AG04449 (cell line): ENCODE measurements at regions of chr11 and their contacts with region 1.

Region 1: DNA sequence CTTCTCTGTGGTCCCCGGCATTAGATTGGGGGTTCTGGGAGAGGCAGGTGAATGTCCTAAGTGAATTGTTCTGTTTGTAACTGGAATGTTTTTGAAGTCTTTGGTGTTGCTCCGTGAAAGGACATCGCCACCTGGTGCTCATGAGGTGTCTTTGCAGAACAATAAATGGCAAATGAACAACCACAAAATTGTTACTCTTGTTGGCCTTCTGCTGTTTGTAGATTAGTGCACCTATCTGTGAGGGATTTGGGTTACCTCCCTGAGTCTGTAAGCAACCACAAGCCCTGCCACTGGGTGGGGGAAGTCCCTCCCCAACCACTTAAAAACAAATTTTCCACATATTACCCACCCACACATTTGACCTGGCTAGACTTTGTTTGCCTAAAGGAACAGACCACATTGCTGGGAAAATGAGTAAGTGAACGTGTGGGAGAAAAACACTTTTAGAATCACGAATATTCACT is 4.7 kb downstream of the MPEG1 start:
- DNase-seq: peak; percentile 21
- H3K4me3 ChIP-seq: no peak overlapping the region
- CTCF ChIP-seq: peak; percentile 68

Region 2: DNA sequence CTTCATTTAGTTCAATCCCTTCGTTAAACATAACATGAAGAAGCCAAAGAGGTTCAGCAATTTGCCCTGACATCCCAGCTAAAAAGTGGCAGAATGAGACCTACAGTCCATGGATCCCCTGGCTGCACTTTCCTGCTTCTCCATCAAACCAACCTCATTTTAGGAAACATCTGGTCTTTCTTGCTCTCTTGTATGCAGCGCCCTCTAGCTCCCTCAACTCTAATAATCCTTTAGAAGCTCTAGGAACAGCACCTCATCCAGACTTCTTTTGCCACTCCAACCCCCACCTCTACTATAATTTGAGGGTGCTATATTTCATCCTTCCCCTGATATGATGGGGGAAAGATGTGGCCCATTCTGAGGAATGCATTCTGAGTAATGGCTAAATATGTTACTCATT is 578.2 kb before region 1 on chr11:
- CTCF ChIA-PET with region 1: no interaction called
- POLR2A ChIA-PET with region 1: no interaction called
- DNase-seq: peak; percentile 9
- H3K4me3 ChIP-seq: no peak overlapping the region
- CTCF ChIP-seq: peak; percentile 56

Region 3: DNA sequence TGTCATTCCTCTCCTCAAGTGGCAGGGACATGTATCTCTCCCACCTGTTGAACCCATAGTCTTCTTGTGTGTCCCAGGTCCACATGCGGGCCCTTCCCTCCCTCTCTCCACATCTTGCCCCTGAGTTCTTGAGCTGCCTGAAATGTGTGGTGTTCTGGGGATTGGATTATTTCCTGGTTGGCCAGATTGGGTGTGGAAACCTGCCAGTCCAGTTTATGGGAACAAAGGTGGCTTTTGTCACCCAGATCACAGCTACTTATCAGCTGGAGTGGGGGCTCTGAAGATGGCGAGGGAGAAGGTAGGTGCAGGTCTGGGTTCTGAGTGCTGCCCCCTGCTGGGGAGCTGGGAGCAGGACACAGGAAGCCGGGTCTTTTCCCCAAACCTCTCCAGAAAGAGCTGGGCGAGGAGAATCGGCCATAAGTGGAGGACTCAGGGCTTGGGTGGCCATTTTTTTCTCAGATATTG is 21.9 kb before region 1 on chr11:
- CTCF ChIA-PET with region 1: interaction called, 450 read pairs
- POLR2A ChIA-PET with region 1: no interaction called
- DNase-seq: no peak
- H3K4me3 ChIP-seq: no peak overlapping the region
- CTCF ChIP-seq: peak; percentile 62

Region 4: GRCh38 chr11:59197991-59198390 is 10.0 kb before region 1 on chr11:
- CTCF ChIA-PET with region 1: interaction called, 31 read pairs
- POLR2A ChIA-PET with region 1: no interaction called
- DNase-seq: peak; percentile 53
- H3K4me3 ChIP-seq: no peak overlapping the region
- CTCF ChIP-seq: no peak

Region 5: GRCh38 chr11:59224351-59224928 is 16.4 kb after region 1 on chr11:
- CTCF ChIA-PET with region 1: interaction called, 17 read pairs
- POLR2A ChIA-PET with region 1: no interaction called
- DNase-seq: no peak
- H3K4me3 ChIP-seq: no peak overlapping the region
- CTCF ChIP-seq: no peak

Region 6: GRCh38 chr11:59243633-59244032 is 35.6 kb after region 1 on chr11:
- CTCF ChIA-PET with region 1: no interaction called
- POLR2A ChIA-PET with region 1: no interaction called
- DNase-seq: no peak
- H3K4me3 ChIP-seq: no peak overlapping the region
- CTCF ChIP-seq: no peak

Region 7: DNA sequence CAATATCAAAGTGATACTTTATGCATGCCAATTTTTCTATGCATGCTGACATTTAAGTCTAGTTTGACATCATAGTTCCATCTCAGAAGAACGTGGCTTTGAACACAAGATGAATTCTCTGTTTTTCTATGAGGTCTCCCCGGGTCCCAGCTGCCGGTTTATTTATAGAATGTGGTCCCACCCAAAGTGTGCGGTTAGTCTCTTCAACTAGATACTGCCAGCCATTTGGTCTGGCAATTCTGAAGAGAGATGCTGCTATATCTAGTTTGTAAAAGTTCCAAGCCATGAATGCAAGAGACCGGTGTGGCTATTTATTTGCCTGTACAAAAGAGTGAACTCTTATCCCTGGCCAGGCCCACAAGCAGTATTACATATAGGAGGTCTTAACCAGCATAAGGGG is 209.0 kb after region 1 on chr11:
- CTCF ChIA-PET with region 1: no interaction called
- POLR2A ChIA-PET with region 1: no interaction called
- DNase-seq: no peak
- H3K4me3 ChIP-seq: no peak overlapping the region
- CTCF ChIP-seq: no peak